GM10248 (cell line): ENCODE measurements at regions of chr1 and their contacts with region 1.

Region 1: GRCh38 chr1:200979574-200980451 is 43.7 kb downstream of the KIF21B start:
- DNase-seq: peak; percentile 74
- CTCF ChIP-seq: peak; percentile 63

Region 2: DNA sequence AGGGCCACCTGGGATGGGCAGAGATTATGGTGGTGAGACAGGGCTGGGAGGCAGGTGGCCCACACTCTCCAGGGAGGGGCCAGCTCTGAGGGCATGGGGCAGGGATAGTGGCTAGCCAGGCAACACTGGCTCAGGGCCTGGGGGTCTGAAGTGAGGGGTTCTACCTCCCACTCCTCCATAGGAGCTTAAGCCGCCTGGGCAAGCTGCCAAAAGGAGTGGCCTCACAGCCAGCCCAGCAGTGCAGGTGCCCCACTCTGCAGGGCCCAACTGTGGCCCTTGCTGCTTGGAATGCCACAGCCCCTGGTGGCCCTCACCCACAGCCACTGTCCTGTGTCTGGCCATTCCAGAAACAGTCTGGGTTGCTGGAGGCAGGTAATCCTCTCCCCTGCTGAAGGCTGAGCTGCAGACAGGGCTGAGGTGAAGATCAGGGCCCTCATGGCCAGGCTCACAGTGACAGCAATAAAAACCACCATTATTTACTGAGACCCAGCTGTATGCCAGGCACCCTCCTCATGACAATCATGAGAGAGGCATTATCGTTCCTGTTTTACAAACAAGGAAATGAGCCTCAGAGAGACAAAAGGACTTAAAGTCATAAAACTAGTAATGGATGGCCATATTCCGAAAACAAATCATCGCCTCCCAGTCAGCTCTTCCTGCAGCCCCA is 12.7 kb after region 1 on chr1:
- CTCF ChIA-PET with region 1: interaction called, 22 read pairs
- POLR2A ChIA-PET with region 1: no interaction called
- DNase-seq: no peak
- CTCF ChIP-seq: no peak

Region 3: DNA sequence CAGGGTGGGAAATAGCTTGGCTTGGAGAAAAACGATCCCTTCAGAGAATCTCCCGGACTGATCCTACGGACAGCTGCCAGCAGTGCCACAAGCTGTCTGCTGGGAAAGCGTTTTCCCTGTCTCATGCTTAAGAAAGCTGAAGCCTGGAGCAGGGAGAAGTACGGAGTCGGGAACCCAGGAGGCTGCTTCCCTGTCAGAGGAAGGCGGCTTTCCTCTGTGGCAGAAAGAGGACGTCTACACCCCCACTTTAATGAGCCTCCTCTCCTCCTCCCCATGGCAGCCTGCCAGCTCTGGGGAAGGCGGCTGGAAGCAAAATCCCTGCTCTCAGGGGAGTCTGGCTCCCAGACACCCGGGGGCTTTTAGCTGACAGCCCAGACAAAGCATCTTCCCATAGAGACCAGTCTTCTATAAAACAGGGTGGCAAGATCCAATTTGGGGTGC is 36.4 kb after region 1 on chr1:
- CTCF ChIA-PET with region 1: interaction called, 31 read pairs
- POLR2A ChIA-PET with region 1: no interaction called
- DNase-seq: no peak
- CTCF ChIP-seq: no peak

Region 4: DNA sequence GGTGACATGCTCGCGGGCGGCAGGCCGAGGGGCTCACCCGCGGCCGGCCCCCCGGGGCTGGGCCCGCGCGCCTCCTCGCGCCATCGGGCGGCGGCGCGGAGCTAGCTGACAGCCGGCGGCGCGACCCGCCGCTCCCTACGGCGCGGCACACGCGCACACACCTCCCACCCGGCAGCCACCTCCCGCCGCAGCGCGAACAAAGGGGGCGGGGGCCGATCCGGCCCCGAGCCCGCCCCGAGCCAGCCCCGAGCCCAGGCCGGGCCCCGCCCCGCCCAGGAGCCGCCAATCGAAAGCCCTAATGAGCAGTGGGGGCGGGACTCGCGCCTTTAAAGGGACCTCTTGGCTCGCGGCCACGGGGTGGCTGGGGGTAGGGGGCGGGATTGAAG is 43.7 kb after region 1 on chr1 and contains the start of gene KIF21B:
- CTCF ChIA-PET with region 1: interaction called, 31 read pairs
- POLR2A ChIA-PET with region 1: no interaction called
- DNase-seq: peak; percentile 94
- CTCF ChIP-seq: no peak

Region 5: DNA sequence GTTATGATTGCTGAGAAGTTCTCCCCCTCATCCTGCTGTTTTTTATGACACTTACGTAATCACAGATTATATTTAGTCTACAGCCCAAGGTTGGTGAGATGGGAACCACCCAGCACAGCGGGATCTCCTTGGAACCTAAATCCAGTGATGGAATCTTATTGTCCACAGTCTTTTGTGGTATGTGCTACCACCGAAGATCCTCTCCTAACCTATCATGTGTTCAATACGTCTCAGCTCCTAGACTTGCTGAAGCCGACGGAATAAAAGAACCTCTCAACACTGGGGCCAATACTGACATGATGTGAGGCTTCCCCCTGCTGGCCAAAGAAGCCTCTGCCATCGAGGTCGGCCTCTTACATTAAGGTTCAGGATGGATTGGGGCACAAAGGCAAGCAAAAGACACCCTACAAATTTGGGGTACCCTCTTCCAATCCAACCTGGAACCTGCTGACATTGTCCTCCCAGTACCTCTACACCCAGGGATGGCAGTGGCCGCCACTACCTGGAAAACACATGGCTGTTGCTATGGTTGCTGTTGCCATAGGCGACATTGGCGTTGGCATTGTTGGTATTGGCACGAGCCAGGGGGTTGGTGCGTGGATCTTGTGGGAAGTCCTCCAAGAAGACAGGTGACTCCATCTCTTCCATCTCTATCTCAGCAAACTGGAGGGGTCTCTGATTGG is 63.1 kb after region 1 on chr1:
- CTCF ChIA-PET with region 1: interaction called, 30 read pairs
- POLR2A ChIA-PET with region 1: no interaction called
- DNase-seq: peak; percentile 79
- CTCF ChIP-seq: peak; percentile 94

Region 6: GRCh38 chr1:201053158-201053860 is 73.5 kb after region 1 on chr1:
- CTCF ChIA-PET with region 1: no interaction called
- POLR2A ChIA-PET with region 1: no interaction called
- DNase-seq: no peak
- CTCF ChIP-seq: peak; percentile 12

Region 7: GRCh38 chr1:201119206-201120197 is 139.7 kb after region 1 on chr1:
- CTCF ChIA-PET with region 1: interaction called, 10 read pairs
- POLR2A ChIA-PET with region 1: no interaction called
- DNase-seq: peak; percentile 53
- CTCF ChIP-seq: peak; percentile 53